Left colon (tissue), 2 donors: ENCODE measurements at regions of chr2 and their contacts with region 1.

Region 1: GRCh38 chr2:181466661-181467576 is 9.7 kb downstream of the ITGA4 start:
- DNase-seq: peak; percentile 40 to 90
- ATAC-seq: no peak

Region 2: DNA sequence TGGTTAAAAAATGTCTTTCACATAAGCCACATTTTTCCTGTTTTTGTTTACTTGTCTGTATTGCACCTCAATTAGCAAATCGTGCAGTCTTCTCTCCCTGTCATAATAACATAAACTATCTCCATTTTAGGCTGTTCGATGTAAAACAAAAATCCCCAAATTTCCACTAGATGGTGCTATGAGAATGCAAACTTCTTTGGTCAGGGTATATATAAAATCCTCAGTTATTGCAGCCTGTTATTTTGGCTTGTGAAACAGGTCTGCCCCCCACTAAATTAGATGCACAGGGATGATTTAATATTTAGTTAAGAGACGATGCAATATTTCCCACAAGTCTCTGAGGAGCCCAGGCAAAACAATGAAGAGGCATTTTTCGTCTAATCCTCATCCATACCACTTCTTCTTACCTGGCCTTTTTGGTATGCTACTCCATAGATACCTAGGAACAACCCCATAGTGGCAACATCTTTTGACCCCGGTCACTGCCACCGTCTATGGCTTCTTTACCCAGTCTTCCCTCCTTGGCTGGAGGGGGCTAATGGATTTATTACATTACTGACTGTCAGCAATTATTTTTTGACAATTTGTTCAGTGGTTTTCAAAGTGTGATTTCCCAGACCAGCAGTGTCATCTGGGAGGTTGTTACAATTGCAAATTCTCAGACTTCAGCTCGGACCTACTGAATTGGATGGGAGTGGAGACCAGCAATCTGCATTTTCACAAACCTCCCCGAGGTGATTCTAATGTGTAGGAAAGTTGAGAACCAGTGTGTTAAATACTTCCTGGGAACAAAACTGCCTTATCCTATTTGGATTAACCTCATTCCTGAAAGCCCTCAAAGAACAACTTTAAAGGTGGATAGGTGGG is 1342.4 kb before region 1 on chr2:
- intact Hi-C with region 1: loop called in 1 of 2 experiments (anchors 5 kb)
- DNase-seq: no peak
- ATAC-seq: peak; percentile 70

Region 3: DNA sequence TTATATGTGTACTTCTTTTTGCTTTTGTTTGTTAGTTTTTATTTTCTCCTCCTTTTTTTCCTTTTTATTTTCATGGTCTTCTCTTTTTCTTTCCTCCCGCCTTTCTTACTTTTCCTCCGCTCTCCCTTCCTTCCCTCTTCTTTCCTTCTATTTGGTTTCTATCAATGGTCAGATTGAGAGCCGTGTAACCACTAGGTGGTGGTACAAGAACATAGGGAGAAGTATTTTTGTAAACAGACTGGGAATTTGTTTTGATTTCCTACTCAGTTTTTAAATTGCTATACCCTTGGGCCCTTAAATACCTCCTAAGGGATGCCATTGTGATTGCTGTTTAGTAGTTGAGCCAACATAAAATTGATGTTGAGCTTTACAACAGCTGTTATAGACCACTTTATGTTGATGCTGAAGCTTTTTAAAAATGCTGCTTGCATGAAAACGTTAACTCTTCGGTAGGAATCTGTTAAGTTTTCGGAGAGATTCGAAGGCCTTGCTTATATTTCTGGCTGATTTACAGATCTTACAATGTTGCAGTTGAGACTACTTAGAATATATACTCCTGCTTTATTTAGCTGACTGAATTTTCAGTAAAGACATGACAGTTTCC is 362.3 kb before region 1 on chr2:
- intact Hi-C with region 1: loop called in 1 of 2 experiments (anchors 10 kb)
- DNase-seq: no peak
- ATAC-seq: peak; percentile 39